ENCODE measurements at regions of chr12 and their contacts with region 1.

Region 1: DNA sequence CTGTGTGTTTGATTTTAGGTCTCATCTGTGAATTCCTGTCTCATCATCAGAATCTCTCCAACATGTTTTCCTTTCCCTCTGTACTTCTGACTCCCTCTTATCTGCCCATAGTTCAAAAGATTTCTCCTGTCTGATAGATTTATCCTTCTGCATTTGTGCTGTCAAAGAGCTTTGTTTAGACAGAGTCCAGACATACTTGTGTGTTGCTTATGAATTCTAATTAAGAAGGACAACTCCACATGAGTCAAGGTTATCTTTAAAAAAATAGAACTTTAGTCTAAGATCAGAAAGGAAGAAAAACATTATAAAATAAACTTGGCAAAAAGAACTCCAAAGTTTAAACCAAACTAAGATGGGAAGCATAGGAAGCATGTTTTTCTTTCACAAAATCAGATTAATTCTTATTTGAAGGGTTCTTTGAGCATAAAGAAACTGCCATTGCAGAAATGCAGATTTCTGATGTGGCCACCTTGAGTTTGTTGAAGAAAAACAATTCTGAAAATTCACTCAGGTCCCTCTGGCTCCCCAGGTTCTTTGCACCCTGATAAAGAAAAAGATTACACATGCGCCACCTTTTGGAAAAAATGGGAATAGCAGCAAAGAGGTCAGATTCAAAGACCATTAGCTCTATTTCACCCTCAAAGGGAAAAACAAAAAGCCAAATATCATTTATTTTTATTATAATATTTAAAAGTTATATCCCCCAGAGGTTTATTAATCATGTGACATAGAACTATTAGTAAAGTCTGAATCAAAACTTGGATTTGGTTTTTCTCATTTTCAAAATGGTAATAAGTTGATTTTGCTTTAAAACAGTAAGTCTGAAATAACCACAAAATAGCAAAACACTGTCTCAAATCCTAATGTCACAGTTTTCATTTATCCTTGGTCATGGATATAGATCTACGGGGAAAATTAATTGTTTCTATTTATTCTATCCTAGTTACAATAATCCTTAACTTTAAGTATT is 143.7 kb upstream of the DCN start:
- DNase-seq: no peak
- H3K4me3 ChIP-seq: no peak overlapping the region
- H3K27ac ChIP-seq: no peak overlapping the region
- H3K4me1 ChIP-seq: no peaks in the 10 kb centered on the region
- H3K27me3 ChIP-seq: no peaks in the 10 kb centered on the region
- CTCF ChIP-seq: peak; percentile 22 to 62 (median 59)

Region 2: DNA sequence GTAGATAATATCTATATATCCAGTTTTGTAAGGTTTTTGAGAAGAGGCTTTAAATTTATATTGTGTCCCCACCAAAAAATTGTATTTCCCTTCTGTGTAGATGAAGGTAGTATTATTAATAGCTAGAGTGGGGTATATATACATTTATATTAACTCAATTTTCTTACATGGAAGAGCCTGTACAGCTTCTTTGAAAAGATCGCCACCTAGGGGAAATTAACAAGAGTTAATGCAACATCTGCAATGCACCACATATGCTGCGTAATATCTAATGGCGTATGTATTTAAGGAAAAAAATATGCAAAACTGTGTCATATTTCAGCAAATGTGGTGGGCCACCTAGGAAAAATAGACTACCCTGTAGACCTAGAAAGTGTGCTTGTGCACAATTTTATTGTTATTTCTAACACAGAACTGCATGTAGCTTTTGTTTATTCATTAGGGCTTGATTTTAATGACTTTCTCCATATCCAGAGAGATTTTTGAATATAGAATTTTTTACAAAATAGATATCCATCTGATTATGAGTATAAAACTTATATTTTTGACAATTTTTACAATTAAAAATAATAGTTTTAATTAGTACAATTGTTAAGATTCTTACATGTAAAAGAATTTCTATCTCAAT is 385.4 kb before region 1 on chr12:
- dilution Hi-C with region 1: no loop called
- DNase-seq: no peak
- H3K4me3 ChIP-seq: no peak overlapping the region
- H3K27ac ChIP-seq: no peak overlapping the region
- H3K4me1 ChIP-seq: peaks cover 17% of the 10 kb centered on the region
- H3K27me3 ChIP-seq: no peaks in the 10 kb centered on the region
- CTCF ChIP-seq: peak in 2 of 3 experiments; percentile 51 to 58

Region 3: DNA sequence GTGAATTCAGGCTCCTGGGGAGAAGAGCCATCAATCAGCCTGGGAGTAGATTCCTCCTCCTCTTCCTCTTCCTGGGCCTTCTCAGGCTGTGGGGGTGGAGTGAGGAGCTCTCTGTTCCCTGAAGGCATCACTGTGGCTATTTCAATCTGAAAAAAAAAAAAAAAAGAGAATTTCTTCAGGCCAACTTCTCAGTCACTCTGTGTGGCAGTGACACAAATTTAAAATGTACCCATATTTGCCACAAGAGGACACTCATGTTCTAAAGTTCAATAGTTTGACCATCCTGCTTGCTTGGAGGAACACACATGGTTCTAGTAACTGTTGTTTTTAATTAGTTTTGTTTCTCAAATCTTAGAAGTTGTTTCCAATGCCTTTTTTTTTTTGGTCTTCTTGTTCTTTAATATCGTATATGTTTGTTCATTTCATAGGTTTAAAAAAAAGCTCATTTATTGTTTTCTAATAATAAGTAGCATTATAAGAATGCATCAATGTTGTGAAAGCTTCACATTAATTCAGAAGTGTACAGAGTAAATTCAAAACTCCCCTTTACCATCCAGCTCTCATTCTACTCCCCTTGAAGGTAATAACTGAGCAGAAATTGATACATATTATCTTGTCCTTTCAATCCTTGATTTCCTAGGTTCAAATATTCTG is 348.1 kb before region 1 on chr12:
- dilution Hi-C with region 1: loop called (anchors 25 kb)
- DNase-seq: no peak
- H3K4me3 ChIP-seq: no peak overlapping the region
- H3K27ac ChIP-seq: no peak overlapping the region
- H3K4me1 ChIP-seq: peaks cover 4% of the 10 kb centered on the region
- H3K27me3 ChIP-seq: no peaks in the 10 kb centered on the region
- CTCF ChIP-seq: peak; percentile 35 to 70 (median 60)

Region 4: GRCh38 chr12:91205826-91206225 is 120.5 kb before region 1 on chr12:
- dilution Hi-C with region 1: no loop called
- DNase-seq: no peak
- H3K4me3 ChIP-seq: no peak overlapping the region
- H3K27ac ChIP-seq: no peak overlapping the region
- H3K4me1 ChIP-seq: peaks cover 7% of the 10 kb centered on the region
- H3K27me3 ChIP-seq: no peaks in the 10 kb centered on the region
- CTCF ChIP-seq: no peak

Measured in keratinocyte (primary cell).